Caco-2 (cell line): ENCODE measurements at regions of chr17 and their contacts with region 1.

Region 1: DNA sequence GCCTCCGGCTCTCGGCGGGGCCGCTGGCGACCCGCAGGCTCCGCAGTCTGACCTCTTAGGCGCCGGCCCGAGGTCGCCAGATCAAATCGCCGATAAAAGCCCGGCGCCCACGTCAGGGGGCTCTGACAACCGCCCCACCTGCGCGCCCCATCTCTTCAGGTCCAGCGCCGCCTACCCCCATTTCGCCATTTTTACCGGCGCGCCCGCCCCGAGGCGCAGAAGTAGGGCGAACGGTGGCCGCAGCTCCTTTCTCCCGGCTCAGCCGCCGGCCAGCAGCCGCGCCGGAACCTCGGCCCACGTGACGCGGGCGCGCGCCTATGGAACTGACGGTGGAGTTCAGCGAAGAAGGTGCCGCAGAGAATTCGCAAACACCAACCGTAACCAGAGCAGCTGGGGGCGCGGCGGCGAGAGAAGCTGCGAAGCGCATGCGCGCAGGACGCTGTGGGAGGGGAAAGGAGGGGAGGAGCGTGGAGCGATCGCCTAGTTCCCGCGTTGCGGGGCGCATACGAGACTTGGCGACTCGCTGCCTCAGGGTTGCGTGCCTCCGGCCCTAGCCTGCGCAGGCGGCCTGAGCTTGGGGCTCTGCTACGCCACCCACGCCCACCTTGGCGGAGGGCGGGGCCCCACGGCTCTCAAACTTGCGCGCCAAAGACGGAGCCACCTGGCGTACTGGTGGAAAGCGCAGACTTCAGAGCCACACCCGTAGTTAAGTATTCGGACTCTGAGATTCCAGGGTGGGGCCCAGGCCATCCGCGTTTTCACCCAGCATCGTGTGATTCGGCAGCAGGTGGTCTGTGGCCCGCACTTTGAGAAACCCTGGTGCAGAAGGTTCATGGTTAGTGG is at the start of gene TRIM37:
- DNase-seq: peak; percentile 99 to 100
- H3K4me3 ChIP-seq: peak within 1 kb of the TSS; percentile 90
- H3K4me3 Mint-ChIP-seq: peak within 1 kb of the TSS; percentile 98
- H3K27ac Mint-ChIP-seq: peak within 1 kb of the TSS; percentile 96
- H3K4me1 ChIP-seq: peaks cover 6% of the 10 kb centered on the region; the same call in 1 of the 2 replicates
- H3K4me1 Mint-ChIP-seq: peaks cover 9% of the 10 kb centered on the region
- H3K27me3 ChIP-seq: no peaks in the 10 kb centered on the region
- H3K27me3 Mint-ChIP-seq: no peaks in the 10 kb centered on the region
- CTCF ChIP-seq: peak in 1 of 2 experiments; percentile 13
- total RNA-seq, gene TRIM37: 37.7 and 44.4 TPM in 2 replicates

Region 2: GRCh38 chr17:59062509-59062908 is 44.2 kb before region 1 on chr17:
- CTCF ChIA-PET with region 1: interaction called, 4 read pairs
- POLR2A ChIA-PET with region 1: interaction called, 4 read pairs
- intact Hi-C with region 1: loop called (anchors 1 kb)
- DNase-seq: peak in 1 of 2 experiments; percentile 55
- H3K4me3 ChIP-seq: no peak overlapping the region
- H3K4me3 Mint-ChIP-seq: peak overlapping the region; percentile 44
- H3K27ac Mint-ChIP-seq: peak overlapping the region; percentile 76
- H3K4me1 ChIP-seq: peaks cover 42% of the 10 kb centered on the region
- H3K4me1 Mint-ChIP-seq: peaks cover 17% of the 10 kb centered on the region
- H3K27me3 ChIP-seq: no peaks in the 10 kb centered on the region
- H3K27me3 Mint-ChIP-seq: no peaks in the 10 kb centered on the region
- CTCF ChIP-seq: no peak

Region 3: GRCh38 chr17:59155439-59156182 is 48.9 kb after region 1 on chr17 and contains the start of gene PRR11:
- CTCF ChIA-PET with region 1: interaction called, 4 read pairs
- POLR2A ChIA-PET with region 1: interaction called, 38 read pairs
- intact Hi-C with region 1: loop called (anchors 1 kb)
- DNase-seq: peak; percentile 96 to 100
- H3K4me3 ChIP-seq: peak within 1 kb of the TSS; percentile 82
- H3K4me3 Mint-ChIP-seq: no peak within 1 kb of the TSS
- H3K27ac Mint-ChIP-seq: no peak within 1 kb of the TSS
- H3K4me1 ChIP-seq: peaks cover 20% of the 10 kb centered on the region
- H3K4me1 Mint-ChIP-seq: peaks cover 31% of the 10 kb centered on the region
- H3K27me3 ChIP-seq: no peaks in the 10 kb centered on the region
- H3K27me3 Mint-ChIP-seq: no peaks in the 10 kb centered on the region
- CTCF ChIP-seq: no peak
- total RNA-seq, gene PRR11: 80.2 and 89.9 TPM in 2 replicates